Activated CD4-positive, alpha-beta T cell treated with anti-CD3 and anti-CD28 coated beads, Interleukin-2, amount 10 ng/mL, durations not matched to agents 24 days and 14 days (primary cell): ENCODE measurements at regions of chr1 and their contacts with region 1.

Region 1: GRCh38 chr1:154982897-154983648 is at the start of gene FLAD1:
- DNase-seq: peak; percentile 99
- H3K4me3 Mint-ChIP-seq: no peak within 1 kb of the TSS
- H3K27ac Mint-ChIP-seq: peak within 1 kb of the TSS; percentile 8
- H3K4me1 Mint-ChIP-seq: peaks cover 11% of the 10 kb centered on the region
- H3K27me3 Mint-ChIP-seq: no peaks in the 10 kb centered on the region
- total RNA-seq, gene FLAD1: 69.9 and 71.8 TPM in 2 replicates

Region 2: DNA sequence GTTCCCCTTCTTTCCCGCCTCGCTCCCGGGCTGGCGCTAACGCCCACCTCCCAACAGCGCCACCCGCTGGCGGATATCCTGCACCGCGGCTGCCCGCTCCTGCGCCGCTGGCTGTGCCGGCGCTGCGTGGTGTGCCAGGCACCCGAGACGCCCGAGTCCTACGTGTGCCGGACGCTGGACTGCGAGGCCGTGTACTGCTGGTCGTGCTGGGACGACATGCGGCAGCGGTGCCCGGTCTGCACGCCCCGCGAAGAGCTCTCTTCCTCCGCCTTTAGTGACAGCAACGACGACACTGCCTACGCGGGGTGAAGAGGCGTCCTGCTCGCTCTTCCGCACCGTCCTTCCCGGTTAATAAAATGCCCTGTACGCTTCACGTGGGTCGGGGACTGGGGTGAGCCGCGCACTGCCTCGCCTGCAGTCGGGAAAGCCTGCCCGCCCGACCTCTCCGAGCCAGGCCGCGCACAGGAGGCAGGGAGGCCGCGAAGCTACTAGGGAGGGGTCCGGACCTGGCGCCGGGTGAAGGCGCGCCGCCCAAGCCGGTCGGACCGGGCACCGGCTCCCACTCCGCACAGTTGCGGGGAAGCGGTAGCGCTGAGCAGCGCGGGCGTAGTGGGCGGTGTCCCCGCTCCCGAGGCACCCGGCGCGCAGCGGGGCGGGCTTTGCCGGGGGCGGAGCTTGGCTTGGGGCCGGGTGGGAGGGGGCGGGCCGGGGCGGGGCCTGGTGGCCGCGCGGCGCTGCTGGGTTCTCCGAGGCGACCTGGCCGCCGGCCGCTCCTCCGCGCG is 67.7 kb after region 1 on chr1 and contains the start of gene ADAM15:
- intact Hi-C with region 1: loop called (anchors 2 kb)
- DNase-seq: peak; percentile 96
- H3K4me3 Mint-ChIP-seq: peak within 1 kb of the TSS; percentile 88
- H3K27ac Mint-ChIP-seq: peak within 1 kb of the TSS; percentile 89
- H3K4me1 Mint-ChIP-seq: peaks cover 22% of the 10 kb centered on the region
- H3K27me3 Mint-ChIP-seq: no peaks in the 10 kb centered on the region
- total RNA-seq, gene ADAM15: 79.7 and 84.5 TPM in 2 replicates

Region 3: GRCh38 chr1:155135415-155136028 is 152.4 kb after region 1 on chr1 and contains the start of gene SLC50A1:
- intact Hi-C with region 1: loop called (anchors 5 kb)
- DNase-seq: peak; percentile 98
- H3K4me3 Mint-ChIP-seq: peak within 1 kb of the TSS; percentile 98
- H3K27ac Mint-ChIP-seq: peak within 1 kb of the TSS; percentile 98
- H3K4me1 Mint-ChIP-seq: peaks cover 44% of the 10 kb centered on the region
- H3K27me3 Mint-ChIP-seq: peaks cover 7% of the 10 kb centered on the region
- total RNA-seq, gene SLC50A1: 46.2 and 46.3 TPM in 2 replicates

Region 4: GRCh38 chr1:155172732-155173477 is 189.8 kb after region 1 on chr1 and contains the start of gene KRTCAP2:
- intact Hi-C with region 1: loop called (anchors 2 kb)
- DNase-seq: peak; percentile 98
- H3K4me3 Mint-ChIP-seq: peak within 1 kb of the TSS; percentile 99
- H3K27ac Mint-ChIP-seq: peak within 1 kb of the TSS; percentile 99
- H3K4me1 Mint-ChIP-seq: peaks cover 51% of the 10 kb centered on the region
- H3K27me3 Mint-ChIP-seq: peaks cover 6% of the 10 kb centered on the region
- total RNA-seq, gene KRTCAP2: 244 and 245 TPM in 2 replicates

Region 5: GRCh38 chr1:155193275-155193990 is 210.4 kb after region 1 on chr1:
- intact Hi-C with region 1: loop called (anchors 5 kb)
- DNase-seq: peak; percentile 94
- H3K4me3 Mint-ChIP-seq: peak overlapping the region; percentile 97
- H3K27ac Mint-ChIP-seq: peak overlapping the region; percentile 100
- H3K4me1 Mint-ChIP-seq: peaks cover 34% of the 10 kb centered on the region
- H3K27me3 Mint-ChIP-seq: no peaks in the 10 kb centered on the region